Prostate gland (tissue), 2 donors: ENCODE measurements at regions of chr2 and their contacts with region 1.

Region 1: DNA sequence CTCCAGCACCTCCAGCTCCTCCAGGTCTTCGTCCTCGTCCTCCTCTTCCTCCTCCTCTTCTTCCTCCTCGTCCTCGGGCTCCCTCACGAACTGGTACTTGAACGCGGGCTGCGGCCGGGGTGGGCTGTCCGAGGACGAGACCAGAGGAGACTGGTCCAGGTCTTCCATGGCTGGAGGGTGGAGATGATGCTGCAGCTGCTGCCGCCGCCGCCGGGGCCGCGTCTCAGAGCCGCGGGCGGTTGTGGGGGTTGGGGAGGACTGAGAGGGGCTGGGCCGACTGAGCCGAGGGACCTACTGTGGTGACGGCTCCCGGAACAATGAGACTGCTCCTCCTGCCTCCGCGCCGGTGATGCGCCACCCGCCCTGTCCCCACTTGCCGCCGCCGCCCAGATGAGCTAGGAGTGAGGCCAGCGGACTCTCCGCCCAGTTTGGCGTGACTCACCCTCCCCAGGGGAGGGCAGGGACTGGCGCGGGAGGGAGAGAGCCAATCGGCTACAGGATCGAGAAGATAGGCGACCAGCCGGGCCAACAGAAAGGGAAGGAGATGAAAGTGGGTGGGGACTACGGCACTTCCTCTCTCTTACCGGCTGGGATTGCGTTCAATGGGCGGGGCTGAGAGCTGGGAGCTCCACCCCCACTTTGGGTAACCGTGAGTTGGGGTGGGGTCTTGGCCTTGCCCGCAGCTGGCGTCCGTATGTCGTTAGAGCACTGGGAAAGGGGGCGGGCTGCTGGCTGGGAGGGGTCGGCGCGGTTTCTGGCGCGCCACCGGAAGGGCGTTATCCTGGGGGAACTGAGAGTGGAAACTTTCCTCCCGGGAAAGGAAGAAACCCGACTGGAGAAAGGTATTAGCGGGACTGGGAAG is at the start of gene RTN4:
- DNase-seq: peak; percentile 99
- H3K4me3 ChIP-seq: peak within 1 kb of the TSS; percentile 97 to 100
- H3K27ac ChIP-seq: peak within 1 kb of the TSS; percentile 98 to 99
- H3K4me1 ChIP-seq: peaks cover 8% of the 10 kb centered on the region
- H3K27me3 ChIP-seq: no peaks in the 10 kb centered on the region
- CTCF ChIP-seq: peak in 1 of 4 experiments; percentile 21
- POLR2A ChIP-seq: peak; percentile 100
- total RNA-seq, gene RTN4: 190 to 249 TPM

Region 2: GRCh38 chr2:54955358-54956110 is 94.8 kb before region 1 on chr2:
- intact Hi-C with region 1: no loop called
- DNase-seq: no peak
- H3K4me3 ChIP-seq: no peak overlapping the region
- H3K27ac ChIP-seq: peak overlapping the region in 1 of 2 donors; percentile 39
- H3K4me1 ChIP-seq: peaks cover 11% of the 10 kb centered on the region
- H3K27me3 ChIP-seq: no peaks in the 10 kb centered on the region
- CTCF ChIP-seq: no peak
- POLR2A ChIP-seq: no peak

Region 3: DNA sequence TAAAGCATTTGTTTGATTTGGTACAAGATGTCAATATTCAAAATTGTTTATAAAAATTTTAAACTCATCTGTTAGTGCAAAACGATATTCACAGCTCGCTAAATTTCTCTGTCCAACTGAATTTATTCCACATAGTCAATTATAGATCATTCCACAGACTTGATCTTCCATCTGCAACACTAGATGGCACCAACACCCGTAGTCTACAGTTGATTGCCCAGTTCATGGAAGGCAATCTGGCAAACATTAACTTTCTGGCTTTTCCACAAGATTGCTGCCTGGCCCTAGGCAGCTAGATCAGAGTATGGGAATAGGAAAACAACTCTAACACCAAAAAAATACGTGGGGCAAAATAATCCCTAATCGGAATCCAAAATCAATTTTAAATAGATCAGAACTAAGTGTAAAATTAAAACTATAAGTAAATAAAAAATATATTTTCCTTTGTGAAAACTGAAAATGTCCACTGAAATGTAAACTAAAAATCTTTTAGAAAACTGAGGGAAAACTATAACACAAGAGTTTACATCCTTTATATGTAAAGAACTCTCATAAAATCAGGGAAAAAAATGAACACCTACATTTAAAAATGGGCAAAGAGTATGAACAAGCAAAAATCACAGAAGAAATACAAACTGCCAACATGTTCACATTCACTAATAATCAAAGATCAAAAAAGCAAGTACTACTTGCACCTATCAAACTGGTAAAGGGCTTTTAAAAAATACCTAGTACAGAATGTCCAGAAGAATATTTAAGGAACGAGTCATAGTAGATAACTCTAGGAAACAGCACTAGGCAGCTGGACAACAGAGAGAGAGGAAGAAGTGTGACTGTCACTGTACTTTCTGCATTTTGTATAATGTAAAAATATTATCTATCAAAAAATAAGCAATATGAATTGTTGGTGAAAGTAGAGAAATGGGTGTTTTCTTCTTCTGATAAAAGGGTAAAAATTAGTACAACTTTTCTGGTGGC is 35.1 kb before region 1 on chr2:
- intact Hi-C with region 1: loop called (anchors 2 kb)
- DNase-seq: peak; percentile 58
- H3K4me3 ChIP-seq: no peak overlapping the region
- H3K27ac ChIP-seq: peak overlapping the region in 1 of 2 donors; percentile 7
- H3K4me1 ChIP-seq: peaks cover 24% of the 10 kb centered on the region
- H3K27me3 ChIP-seq: no peaks in the 10 kb centered on the region
- CTCF ChIP-seq: peak in 3 of 4 experiments; percentile 53 to 82 (median 71)
- POLR2A ChIP-seq: no peak

Region 4: DNA sequence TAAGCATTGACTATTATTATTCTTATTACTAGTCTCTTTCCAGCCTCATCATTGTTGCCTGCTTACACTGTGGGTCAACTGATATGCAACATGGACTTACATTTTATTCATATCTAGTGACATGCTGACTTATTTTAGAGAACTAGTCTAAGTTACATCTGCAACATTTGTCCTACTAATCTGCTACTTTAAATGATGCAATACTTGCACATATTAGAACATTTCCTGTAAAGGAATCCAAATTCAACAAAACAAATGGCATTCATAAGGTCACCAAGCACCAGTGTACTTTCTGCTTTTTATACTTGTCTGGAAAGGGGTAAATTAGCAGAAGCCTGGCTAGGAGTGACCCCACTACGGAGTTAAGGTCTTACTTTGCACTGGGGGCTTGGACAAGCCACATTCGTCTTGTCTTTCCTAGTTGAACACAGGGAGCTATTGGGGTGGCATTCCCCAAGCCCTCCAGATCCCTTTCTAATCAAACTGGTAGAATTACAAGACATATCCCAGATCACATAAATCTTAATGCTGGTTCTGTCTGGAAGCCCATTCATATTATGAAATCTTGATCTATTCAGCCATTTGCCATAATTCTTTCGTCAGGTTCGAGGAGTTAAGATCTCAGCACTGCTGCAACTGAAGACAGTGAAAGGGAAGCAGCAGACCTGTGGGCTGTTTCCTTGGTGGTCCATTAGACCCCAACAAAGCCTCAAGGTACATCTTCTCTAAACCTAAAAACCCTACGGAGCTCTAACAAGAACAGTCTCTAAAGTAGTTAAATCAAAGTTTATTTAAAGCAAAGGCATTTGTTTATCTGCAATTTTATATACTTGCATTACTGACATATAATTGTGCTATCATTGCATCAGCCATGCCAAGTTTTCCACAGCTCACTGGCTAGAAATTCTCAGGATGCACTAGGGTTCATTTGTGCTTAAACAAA is 49.8 kb after region 1 on chr2:
- intact Hi-C with region 1: loop called (anchors 2 kb)
- DNase-seq: peak; percentile 52
- H3K4me3 ChIP-seq: peak overlapping the region in 1 of 2 donors; percentile 5
- H3K27ac ChIP-seq: peak overlapping the region; percentile 71 to 85
- H3K4me1 ChIP-seq: peaks cover 7% of the 10 kb centered on the region
- H3K27me3 ChIP-seq: no peaks in the 10 kb centered on the region
- CTCF ChIP-seq: no peak
- POLR2A ChIP-seq: no peak

Region 5: GRCh38 chr2:55111570-55112228 is 61.3 kb after region 1 on chr2:
- intact Hi-C with region 1: loop called (anchors 5 kb)
- DNase-seq: no peak
- H3K4me3 ChIP-seq: no peak overlapping the region
- H3K27ac ChIP-seq: peak overlapping the region in 1 of 2 donors; percentile 52
- H3K4me1 ChIP-seq: no peaks in the 10 kb centered on the region
- H3K27me3 ChIP-seq: no peaks in the 10 kb centered on the region
- CTCF ChIP-seq: no peak
- POLR2A ChIP-seq: no peak